ENCODE measurements at regions of chr11 and their contacts with region 1.

Region 1: GRCh38 chr11:56967726-56968125 is 21.0 kb upstream of the OR5AK2 start:
- DNase-seq: no peak
- ATAC-seq: no peak
- H3K4me3 ChIP-seq: no peak overlapping the region
- H3K27ac ChIP-seq: no peak overlapping the region
- H3K4me1 ChIP-seq: no peaks in the 10 kb centered on the region
- H3K27me3 ChIP-seq: no peaks in the 10 kb centered on the region
- CTCF ChIP-seq: no peak
- EP300 ChIP-seq: no peak
- POLR2A ChIP-seq: no peak
- RAD21 ChIP-seq: no peak

Region 2: GRCh38 chr11:56932572-56933220 is 35.0 kb before region 1 on chr11:
- CTCF ChIA-PET with region 1: no interaction called
- POLR2A ChIA-PET with region 1: no interaction called
- in situ Hi-C with region 1: no loop called
- intact Hi-C with region 1: loop called (anchors 2 kb)
- DNase-seq: peak in 1 of 4 experiments; percentile 1
- ATAC-seq: no peak
- H3K4me3 ChIP-seq: no peak overlapping the region
- H3K27ac ChIP-seq: no peak overlapping the region
- H3K4me1 ChIP-seq: no peaks in the 10 kb centered on the region
- H3K27me3 ChIP-seq: no peaks in the 10 kb centered on the region
- CTCF ChIP-seq: no peak
- EP300 ChIP-seq: no peak
- POLR2A ChIP-seq: no peak
- RAD21 ChIP-seq: no peak